ENCODE measurements at regions of chr2 and their contacts with region 1.

Region 1: DNA sequence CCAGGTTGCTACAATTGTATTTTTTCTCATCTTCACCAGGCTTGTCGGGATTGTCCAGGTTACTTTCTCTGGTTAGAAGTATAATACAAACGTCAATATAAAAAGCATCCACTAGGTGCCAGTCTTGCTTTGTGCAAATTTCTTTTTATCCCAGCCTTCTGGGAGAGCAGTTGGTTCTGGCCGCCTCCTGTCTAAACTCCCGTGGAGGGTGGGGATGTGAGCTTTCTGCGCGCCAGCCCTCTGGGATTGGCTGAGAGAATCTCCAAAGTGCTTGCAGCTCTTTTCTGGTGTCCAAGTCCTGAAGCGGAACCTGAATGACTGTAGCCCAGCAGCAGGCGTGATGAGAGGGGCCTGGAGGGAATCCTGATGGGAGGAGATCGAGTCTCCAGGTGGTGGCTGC is 22.4 kb upstream of the TOGARAM2 start:
- DNase-seq: no peak

Region 2: GRCh38 chr2:29196792-29197788 is 238.4 kb after region 1 on chr2:
- intact Hi-C with region 1: loop called (anchors 1 kb)
- DNase-seq: no peak

Region 3: DNA sequence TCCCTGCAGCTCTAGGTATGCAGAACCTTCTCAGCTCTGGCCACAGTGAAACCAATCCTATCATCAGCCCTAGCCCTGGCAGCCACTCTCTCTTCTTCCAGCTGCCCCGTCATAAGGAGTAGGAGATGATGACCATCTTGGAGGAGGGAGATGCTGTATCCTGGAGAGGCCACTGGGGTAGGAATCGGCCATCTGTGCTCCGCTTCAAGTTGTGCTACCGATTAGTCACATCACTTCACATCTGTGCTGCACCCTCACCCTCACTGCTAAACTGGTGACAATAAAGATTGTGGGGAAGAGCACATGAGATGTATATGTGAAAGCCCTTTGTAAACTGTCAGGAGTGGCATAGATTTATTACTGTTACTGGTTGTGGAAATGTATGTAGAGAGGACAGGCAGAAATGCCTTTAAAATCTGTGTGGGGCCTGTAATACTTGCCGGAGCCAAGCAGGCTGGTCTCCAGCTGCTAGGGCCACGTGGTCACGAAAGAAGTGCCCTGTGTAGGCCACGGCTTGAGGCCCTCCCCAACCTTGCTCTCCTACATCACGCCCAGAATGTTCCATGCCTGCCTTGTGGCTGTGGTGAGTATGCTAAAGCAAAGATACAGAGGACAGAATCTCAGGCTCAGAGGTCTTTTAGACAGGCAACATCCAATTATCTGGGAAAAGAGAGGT is 393.4 kb after region 1 on chr2:
- intact Hi-C with region 1: no loop called
- DNase-seq: no peak

Region 4: GRCh38 chr2:29841386-29842004 is 882.8 kb after region 1 on chr2:
- intact Hi-C with region 1: loop called (anchors 10 kb)
- DNase-seq: no peak

Region 5: GRCh38 chr2:30072250-30072842 is 1113.7 kb after region 1 on chr2:
- intact Hi-C with region 1: loop called (anchors 5 kb)
- DNase-seq: no peak